ENCODE measurements at regions of chrX and their contacts with region 1.

Region 1: GRCh38 chrX:150365051-150365989 is 2.2 kb downstream of the MAMLD1 start:
- DNase-seq: peak; percentile 74 to 88 (median 81)
- H3K4me3 ChIP-seq: peak overlapping the region; percentile 28 to 65 (median 55)
- H3K27ac ChIP-seq: peak overlapping the region; percentile 74 to 85
- H3K4me1 ChIP-seq: peaks cover 0 to 2% (median 0%) of the 10 kb centered on the region in 3 donors
- H3K27me3 ChIP-seq: peaks cover 5% of the 10 kb centered on the region
- CTCF ChIP-seq: peak; percentile 43

Region 2: GRCh38 chrX:149962859-149963757 is 402.2 kb before region 1 on chrX:
- intact Hi-C with region 1: loop called (anchors 10 kb)
- DNase-seq: peak in 4 of 5 donors; percentile 46 to 79 (median 50)
- H3K4me3 ChIP-seq: no peak overlapping the region
- H3K27ac ChIP-seq: peak overlapping the region in 1 of 2 donors; percentile 47
- H3K4me1 ChIP-seq: no peaks in the 10 kb centered on the region
- H3K27me3 ChIP-seq: no peaks in the 10 kb centered on the region
- CTCF ChIP-seq: peak; percentile 71

Region 3: GRCh38 chrX:150127216-150127615 is 238.1 kb before region 1 on chrX:
- intact Hi-C with region 1: no loop called
- DNase-seq: no peak
- H3K4me3 ChIP-seq: no peak overlapping the region
- H3K27ac ChIP-seq: no peak overlapping the region
- H3K4me1 ChIP-seq: no peaks in the 10 kb centered on the region
- H3K27me3 ChIP-seq: no peaks in the 10 kb centered on the region
- CTCF ChIP-seq: no peak

Region 4: GRCh38 chrX:150489359-150490015 is 124.2 kb after region 1 on chrX:
- intact Hi-C with region 1: no loop called
- DNase-seq: peak in 1 of 5 donors; percentile 34
- H3K4me3 ChIP-seq: no peak overlapping the region
- H3K27ac ChIP-seq: no peak overlapping the region
- H3K4me1 ChIP-seq: no peaks in the 10 kb centered on the region
- H3K27me3 ChIP-seq: no peaks in the 10 kb centered on the region
- CTCF ChIP-seq: no peak

Region 5: GRCh38 chrX:150752124-150752523 is 386.8 kb after region 1 on chrX:
- intact Hi-C with region 1: no loop called
- DNase-seq: no peak
- H3K4me3 ChIP-seq: no peak overlapping the region
- H3K27ac ChIP-seq: no peak overlapping the region
- H3K4me1 ChIP-seq: no peaks in the 10 kb centered on the region
- H3K27me3 ChIP-seq: no peaks in the 10 kb centered on the region
- CTCF ChIP-seq: no peak

Region 6: GRCh38 chrX:150767475-150768131 is 402.3 kb after region 1 on chrX:
- intact Hi-C with region 1: no loop called
- DNase-seq: peak in 2 of 5 donors; percentile 7 to 48
- H3K4me3 ChIP-seq: no peak overlapping the region
- H3K27ac ChIP-seq: no peak overlapping the region
- H3K4me1 ChIP-seq: no peaks in the 10 kb centered on the region
- H3K27me3 ChIP-seq: no peaks in the 10 kb centered on the region
- CTCF ChIP-seq: no peak